Dorsolateral prefrontal cortex (tissue), 120 donors: ENCODE measurements at regions of chr12 and their contacts with region 1.

Region 1: DNA sequence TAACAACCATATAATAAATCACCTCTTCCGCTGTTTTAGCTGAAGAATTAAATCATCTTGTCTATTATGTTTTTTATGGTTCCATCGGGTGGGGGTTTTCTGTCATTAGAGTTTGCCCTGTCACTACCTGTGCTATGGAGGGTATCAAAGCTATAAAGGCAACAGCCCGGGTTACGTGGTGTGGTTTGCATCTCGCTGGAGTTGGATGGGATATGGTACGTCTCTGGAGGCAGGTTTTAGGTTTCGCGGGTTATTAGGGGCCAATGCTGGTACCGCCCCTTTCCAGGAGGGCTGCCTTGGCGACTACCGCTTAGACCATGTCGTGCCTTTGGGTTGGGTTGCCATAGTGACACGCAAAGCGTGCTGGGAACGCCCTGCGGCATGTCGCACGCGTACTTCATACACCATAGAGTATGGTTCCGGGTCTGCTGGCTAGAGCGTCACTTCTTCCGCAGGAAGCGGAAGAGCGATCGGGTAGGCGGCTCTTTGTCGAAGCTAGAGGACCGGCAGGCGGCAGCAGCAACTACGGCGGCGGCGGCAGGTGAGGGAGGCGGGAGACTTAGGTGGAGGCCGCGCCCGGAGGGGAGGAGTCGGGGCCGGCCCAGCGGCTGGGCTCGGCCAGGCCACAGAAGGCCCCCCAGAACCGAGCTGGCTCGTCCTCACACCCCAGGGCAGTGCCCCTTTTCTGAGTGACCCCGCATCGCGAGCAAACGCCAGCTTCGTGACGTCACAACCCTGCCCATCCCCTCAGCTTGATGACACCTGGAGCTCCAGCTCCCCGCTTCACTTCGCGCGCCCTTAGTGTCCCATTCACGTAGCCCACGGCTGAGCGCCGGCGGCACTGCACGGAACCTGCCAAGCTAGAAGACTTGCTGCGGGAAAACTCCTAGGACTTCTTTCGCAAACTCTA is at the start of gene ZC3H10:
- DNase-seq: peak; percentile 94 to 99 (median 98)
- H3K4me3 ChIP-seq: peak within 1 kb of the TSS; percentile 59 to 98 (median 85)
- H3K27ac ChIP-seq: peak within 1 kb of the TSS; percentile 64 to 99 (median 96)
- H3K27me3 ChIP-seq: no peaks in the 10 kb centered on the region
- CTCF ChIP-seq: peak in 55 of 56 donors; percentile 34 to 85 (median 68)
- total RNA-seq, gene ZC3H10: 4.3 to 14.7 (median 8.4) TPM

Region 2: GRCh38 chr12:55996715-55997534 is 121.1 kb before region 1 on chr12 and contains the start of gene SUOX:
- intact Hi-C with region 1: loop called in 1 of 2 experiments (anchors 5 kb)
- DNase-seq: peak; percentile 90 to 99 (median 98)
- H3K4me3 ChIP-seq: peak within 1 kb of the TSS; percentile 57 to 96 (median 79)
- H3K27ac ChIP-seq: peak within 1 kb of the TSS; percentile 25 to 96 (median 89)
- H3K27me3 ChIP-seq: no peaks in the 10 kb centered on the region
- CTCF ChIP-seq: peak in 24 of 56 donors; percentile 15 to 52 (median 30)
- total RNA-seq, gene SUOX: 19.5 to 39.8 (median 28.4) TPM

Region 3: GRCh38 chr12:56078990-56079664 is 38.9 kb before region 1 on chr12:
- intact Hi-C with region 1: loop called in 1 of 2 experiments (anchors 2 kb)
- DNase-seq: peak; percentile 31 to 90 (median 84)
- H3K4me3 ChIP-seq: peak overlapping the region; percentile 33 to 94 (median 73)
- H3K27ac ChIP-seq: peak overlapping the region in 58 of 59 donors; percentile 50 to 99 (median 95)
- H3K27me3 ChIP-seq: peaks cover 0 to 26% (median 0%) of the 10 kb centered on the region in 45 donors
- CTCF ChIP-seq: peak; percentile 25 to 83 (median 65)

Region 4: DNA sequence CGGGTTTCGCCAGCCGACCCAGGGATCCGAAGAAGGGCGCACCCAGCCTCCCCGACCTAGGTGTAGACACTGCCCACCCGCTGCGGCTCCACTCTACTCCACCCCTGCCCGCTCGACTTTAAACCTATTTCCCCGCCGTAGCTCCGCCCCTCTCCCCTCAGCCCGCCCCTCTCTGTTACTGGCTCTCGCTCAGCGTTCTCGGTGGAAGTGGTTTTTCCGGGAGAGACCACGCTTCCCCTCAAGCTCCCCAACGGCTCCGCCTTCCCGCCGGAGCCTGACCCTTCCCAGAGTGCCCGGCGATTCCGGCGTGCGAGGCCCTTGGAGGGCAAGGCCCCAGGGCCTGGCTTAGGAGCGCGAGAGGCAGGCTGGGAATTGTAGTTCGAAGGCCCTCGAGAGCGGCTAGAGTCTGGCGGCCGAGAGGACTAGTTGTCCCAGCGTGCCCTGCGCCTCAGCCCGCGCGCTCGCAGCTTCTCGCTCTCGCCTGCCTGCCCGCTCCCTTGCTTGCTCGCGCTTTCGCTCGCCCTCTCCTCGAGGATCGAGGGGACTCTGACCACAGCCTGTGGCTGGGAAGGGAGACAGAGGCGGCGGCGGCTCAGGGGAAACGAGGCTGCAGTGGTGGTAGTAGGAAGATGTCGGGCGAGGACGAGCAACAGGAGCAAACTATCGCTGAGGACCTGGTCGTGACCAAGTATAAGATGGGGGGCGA is 13.8 kb before region 1 on chr12 and contains the start of gene PA2G4:
- intact Hi-C with region 1: loop called (anchors 1 to 2 kb)
- DNase-seq: peak; percentile 94 to 99 (median 97)
- H3K4me3 ChIP-seq: peak within 1 kb of the TSS; percentile 67 to 98 (median 91)
- H3K27ac ChIP-seq: peak within 1 kb of the TSS; percentile 39 to 96 (median 85)
- H3K27me3 ChIP-seq: no peaks in the 10 kb centered on the region
- CTCF ChIP-seq: peak in 39 of 56 donors; percentile 13 to 68 (median 34)
- total RNA-seq, gene PA2G4: 40.1 to 80.6 (median 58.7) TPM

Region 5: DNA sequence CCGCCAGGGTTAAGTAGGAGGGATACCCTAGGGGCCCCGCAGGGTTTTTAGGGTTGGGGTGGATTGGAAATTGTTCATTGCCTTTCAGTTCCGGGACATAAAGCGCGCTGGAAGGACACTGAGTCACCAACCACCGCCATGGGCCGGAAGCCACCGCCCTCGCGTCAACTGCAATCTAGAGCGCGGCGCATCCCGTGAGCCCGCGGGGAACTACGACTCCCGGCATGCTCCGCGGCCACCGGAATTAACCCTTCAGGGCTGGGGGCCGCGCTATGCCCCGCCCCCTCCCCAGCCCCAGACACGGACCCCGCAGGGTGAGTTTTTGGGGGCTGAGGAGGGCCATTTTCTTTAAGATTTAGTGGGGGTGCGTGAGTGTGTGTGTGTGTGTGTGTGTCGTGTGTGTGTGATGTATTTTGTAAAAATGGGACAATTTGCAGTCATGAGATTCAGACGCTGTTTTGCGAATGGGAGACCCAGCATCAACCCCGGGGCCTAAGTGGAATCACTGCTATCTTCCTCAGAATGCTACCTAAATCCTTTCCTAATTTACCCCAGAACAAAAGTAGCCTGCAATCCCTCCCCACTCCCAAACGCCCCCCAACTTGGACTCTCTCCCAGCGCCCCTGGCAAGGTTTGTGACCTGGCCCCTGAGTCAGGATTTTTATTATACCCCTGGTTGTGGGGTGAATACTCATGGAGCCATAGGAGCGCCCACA is 34.4 kb after region 1 on chr12 and contains the start of gene MYL6B:
- intact Hi-C with region 1: loop called (anchors 5 kb)
- DNase-seq: peak; percentile 91 to 96 (median 94)
- H3K4me3 ChIP-seq: peak within 1 kb of the TSS; percentile 58 to 93 (median 81)
- H3K27ac ChIP-seq: peak within 1 kb of the TSS; percentile 73 to 98 (median 93)
- H3K27me3 ChIP-seq: no peaks in the 10 kb centered on the region
- CTCF ChIP-seq: peak in 27 of 56 donors; percentile 1 to 51 (median 30)
- total RNA-seq, gene MYL6B: 75.7 to 236 (median 160) TPM

Region 6: DNA sequence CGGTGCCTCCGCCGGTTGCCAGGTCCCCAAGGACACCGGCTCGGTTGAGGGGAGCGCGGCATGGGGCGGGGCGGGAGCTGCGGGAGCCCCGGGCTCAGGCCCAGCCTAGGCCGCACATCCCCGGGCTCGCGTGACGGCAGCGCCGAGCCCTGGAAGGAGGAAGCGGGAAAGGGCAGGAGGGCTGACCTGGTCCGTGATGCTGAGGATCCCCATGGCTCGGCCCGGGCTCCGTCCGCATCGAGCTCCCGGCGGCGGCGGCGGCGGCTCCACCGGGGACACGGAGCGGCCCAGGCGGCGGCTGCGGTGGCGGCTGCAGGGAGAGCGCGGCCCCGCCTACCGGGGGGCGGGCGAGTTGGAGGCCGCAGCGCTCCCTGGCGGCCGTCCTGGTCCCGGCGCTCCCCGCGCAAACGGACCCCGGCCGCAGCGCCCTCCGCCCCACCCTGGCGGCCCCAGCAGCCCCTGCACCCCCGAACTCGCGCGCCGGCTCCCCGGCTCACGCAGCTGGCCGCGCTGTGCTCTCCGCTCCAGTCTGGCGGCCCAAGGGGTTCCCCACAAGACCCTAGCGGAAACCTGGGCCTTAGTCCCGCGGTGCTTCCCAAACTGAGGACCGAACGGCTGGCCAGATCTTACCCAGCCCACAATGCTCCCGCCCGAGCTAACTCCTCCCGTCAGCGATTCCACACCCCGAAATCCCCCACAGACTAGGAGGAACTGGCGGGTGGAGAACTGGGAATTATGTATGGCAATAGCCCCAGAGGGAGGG is 140.2 kb after region 1 on chr12 and contains the start of gene ANKRD52:
- intact Hi-C with region 1: loop called in 1 of 2 experiments (anchors 5 kb)
- DNase-seq: peak; percentile 48 to 85 (median 71)
- H3K4me3 ChIP-seq: peak within 1 kb of the TSS; percentile 62 to 98 (median 91)
- H3K27ac ChIP-seq: peak within 1 kb of the TSS; percentile 24 to 94 (median 88)
- H3K27me3 ChIP-seq: no peaks in the 10 kb centered on the region
- CTCF ChIP-seq: peak in 54 of 56 donors; percentile 13 to 96 (median 70)
- total RNA-seq, gene ANKRD52: 32.7 to 75.7 (median 55.2) TPM

Region 7: GRCh38 chr12:56541631-56542030 is 423.6 kb after region 1 on chr12:
- intact Hi-C with region 1: no loop called
- DNase-seq: no peak
- H3K4me3 ChIP-seq: no peak overlapping the region
- H3K27ac ChIP-seq: no peak overlapping the region
- H3K27me3 ChIP-seq: no peaks in the 10 kb centered on the region
- CTCF ChIP-seq: no peak

Region 8: GRCh38 chr12:56636675-56637540 is 518.9 kb after region 1 on chr12:
- intact Hi-C with region 1: loop called in 1 of 2 experiments (anchors 10 kb)
- DNase-seq: peak; percentile 83 to 98 (median 95)
- H3K4me3 ChIP-seq: peak overlapping the region; percentile 46 to 87 (median 78)
- H3K27ac ChIP-seq: peak overlapping the region; percentile 87 to 99 (median 95)
- H3K27me3 ChIP-seq: no peaks in the 10 kb centered on the region
- CTCF ChIP-seq: peak; percentile 32 to 90 (median 72)